PC-9 (cell line): ENCODE measurements at regions of chr14 and their contacts with region 1.

Region 1: GRCh38 chr14:22781586-22781991 is 15.1 kb downstream of the OXA1L start:
- DNase-seq: no peak
- H3K4me3 ChIP-seq: no peak overlapping the region
- H3K27ac ChIP-seq: no peak overlapping the region
- H3K4me1 ChIP-seq: no peaks in the 10 kb centered on the region
- H3K27me3 ChIP-seq: no peaks in the 10 kb centered on the region
- CTCF ChIP-seq: no peak

Region 2: DNA sequence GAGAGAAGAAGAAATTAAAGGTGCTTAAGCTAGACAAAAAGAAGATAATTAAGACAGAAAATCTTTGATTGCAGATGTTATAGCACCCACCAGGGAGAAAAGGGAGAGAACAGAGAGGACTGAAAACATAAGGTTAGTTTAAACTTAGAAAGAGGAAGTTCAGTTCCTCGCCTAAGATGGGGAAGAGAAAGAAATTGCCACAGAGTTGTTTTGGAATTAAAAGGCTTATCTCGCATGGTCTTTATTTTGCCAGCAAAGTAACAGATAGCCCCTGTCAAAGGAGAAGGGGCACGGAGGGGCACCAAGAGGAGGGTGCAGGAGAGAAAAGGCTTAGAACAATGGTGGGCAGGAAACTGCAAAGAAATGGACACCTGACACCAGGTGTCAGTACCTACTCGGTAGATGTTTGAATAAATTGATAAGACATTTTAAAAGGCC is 32.9 kb before region 1 on chr14:
- CTCF ChIA-PET with region 1: no interaction called
- POLR2A ChIA-PET with region 1: no interaction called
- intact Hi-C with region 1: no loop called
- DNase-seq: no peak
- H3K4me3 ChIP-seq: no peak overlapping the region
- H3K27ac ChIP-seq: no peak overlapping the region
- H3K4me1 ChIP-seq: peaks cover 5% of the 10 kb centered on the region; the same call in 1 of the 2 replicates
- H3K27me3 ChIP-seq: no peaks in the 10 kb centered on the region
- CTCF ChIP-seq: no peak

Region 3: DNA sequence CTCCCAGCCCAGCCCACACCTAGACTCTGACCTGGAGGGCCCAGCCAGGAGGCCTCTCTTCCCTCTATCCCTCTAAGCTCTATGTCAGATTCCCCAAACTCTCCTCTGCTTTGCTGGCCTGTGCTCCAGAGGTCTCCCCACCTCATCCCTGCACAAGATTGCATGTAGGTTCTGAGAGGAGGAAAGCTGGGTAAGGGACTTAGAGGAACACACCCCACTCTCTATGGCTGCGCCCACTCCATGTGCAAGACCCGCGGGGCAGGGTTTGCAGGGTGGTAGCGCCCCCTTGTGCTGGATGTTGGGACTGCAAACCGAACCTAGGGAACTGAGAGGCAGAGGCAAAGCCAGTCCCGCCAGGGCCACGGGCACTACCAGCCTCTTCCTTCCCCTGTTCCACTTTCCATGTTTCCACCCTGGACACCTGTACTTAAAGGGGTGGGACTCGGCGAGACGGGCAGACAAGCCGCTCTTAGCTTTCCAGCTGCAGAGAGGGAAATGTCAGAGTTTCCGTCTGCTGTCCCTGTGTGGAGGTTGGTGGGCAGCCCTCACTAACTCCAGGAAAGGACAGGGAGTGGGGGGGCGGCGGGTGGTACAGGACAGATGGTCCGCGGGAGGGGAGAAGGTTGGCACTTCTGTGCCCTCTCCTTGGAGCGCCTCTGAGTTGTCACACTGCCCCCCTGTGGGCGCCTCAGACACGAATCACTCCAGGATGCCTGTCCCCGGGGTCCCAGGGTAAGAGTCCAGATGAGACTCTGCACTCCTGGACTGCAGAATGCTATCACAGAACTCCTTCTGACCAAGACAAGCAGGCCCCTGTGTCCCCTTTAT is 71.6 kb after region 1 on chr14:
- CTCF ChIA-PET with region 1: interaction called, 4 read pairs
- POLR2A ChIA-PET with region 1: no interaction called
- intact Hi-C with region 1: loop called (anchors 1 kb)
- DNase-seq: peak in 1 of 2 experiments; percentile 80
- H3K4me3 ChIP-seq: peak overlapping the region; percentile 48; the same call in 1 of the 2 replicates
- H3K27ac ChIP-seq: no peak overlapping the region
- H3K4me1 ChIP-seq: peaks cover 4% of the 10 kb centered on the region; the same call in 1 of the 2 replicates
- H3K27me3 ChIP-seq: no peaks in the 10 kb centered on the region
- CTCF ChIP-seq: peak; percentile 91

Region 4: GRCh38 chr14:22929104-22929847 is 147.7 kb after region 1 on chr14 and contains the start of gene PRMT5:
- CTCF ChIA-PET with region 1: no interaction called
- POLR2A ChIA-PET with region 1: interaction called, 15 read pairs
- intact Hi-C with region 1: no loop called
- DNase-seq: peak; percentile 94 to 98
- H3K4me3 ChIP-seq: peak within 1 kb of the TSS; percentile 85
- H3K27ac ChIP-seq: peak within 1 kb of the TSS; percentile 42
- H3K4me1 ChIP-seq: peaks cover 32% of the 10 kb centered on the region
- H3K27me3 ChIP-seq: no peaks in the 10 kb centered on the region
- CTCF ChIP-seq: no peak
- total RNA-seq, gene PRMT5: 58.6 and 73.2 TPM in 2 replicates